Activated T-helper 2 cell treated with anti-CD3 and anti-CD28 coated beads, Interferon-gamma antibody, Interleukin-2, Interleukin-4, amounts not matched to agents 10 μg/mL and 5 μg/mL and 100 μg/mL, durations not matched to agents 14 hours and 24 hours and 36 hours (primary cell): ENCODE measurements at regions of chr3 and their contacts with region 1.

Region 1: GRCh38 chr3:122533931-122534334 is 19.2 kb upstream of the KPNA1 start:
- DNase-seq: peak; percentile 44
- H3K4me3 Mint-ChIP-seq: no peak overlapping the region
- H3K27ac Mint-ChIP-seq: peak overlapping the region; percentile 54
- H3K4me1 Mint-ChIP-seq: peaks cover 46% of the 10 kb centered on the region
- H3K27me3 Mint-ChIP-seq: no peaks in the 10 kb centered on the region

Region 2: GRCh38 chr3:122392868-122393844 is 140.8 kb before region 1 on chr3:
- intact Hi-C with region 1: loop called (anchors 10 kb)
- DNase-seq: no peak
- H3K4me3 Mint-ChIP-seq: no peak overlapping the region
- H3K27ac Mint-ChIP-seq: no peak overlapping the region
- H3K4me1 Mint-ChIP-seq: peaks cover 54% of the 10 kb centered on the region
- H3K27me3 Mint-ChIP-seq: no peaks in the 10 kb centered on the region

Region 3: DNA sequence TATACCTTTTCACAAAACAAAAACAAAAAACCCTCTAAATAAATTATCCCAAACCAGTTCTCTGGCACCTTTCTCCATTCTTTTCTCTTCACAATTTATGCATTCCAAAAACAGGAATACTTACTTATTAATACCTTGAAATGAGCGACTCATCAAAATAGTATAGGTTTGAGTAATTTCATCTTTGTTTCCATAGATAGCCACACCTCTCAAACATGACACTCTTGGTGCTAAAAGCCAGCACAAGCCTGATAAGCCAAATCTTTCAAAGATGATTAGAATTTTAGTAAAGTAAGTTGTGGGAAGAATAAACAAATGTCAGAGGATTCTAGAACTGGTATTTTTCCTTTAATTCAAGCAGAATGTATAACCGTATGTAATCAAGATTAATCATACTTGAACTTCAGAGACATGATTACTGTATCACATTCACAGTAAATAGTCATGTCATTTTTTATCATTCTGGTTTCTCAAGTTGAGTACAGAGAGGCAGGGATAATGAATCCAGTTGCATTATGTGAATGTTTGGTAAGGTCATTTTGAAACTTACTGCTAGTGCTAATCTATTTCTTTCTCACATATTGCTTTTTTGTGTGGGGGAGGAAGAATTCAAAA is 106.0 kb before region 1 on chr3:
- intact Hi-C with region 1: loop called (anchors 5 kb)
- DNase-seq: no peak
- H3K4me3 Mint-ChIP-seq: no peak overlapping the region
- H3K27ac Mint-ChIP-seq: peak overlapping the region; percentile 76
- H3K4me1 Mint-ChIP-seq: peaks cover 17% of the 10 kb centered on the region
- H3K27me3 Mint-ChIP-seq: no peaks in the 10 kb centered on the region

Region 4: DNA sequence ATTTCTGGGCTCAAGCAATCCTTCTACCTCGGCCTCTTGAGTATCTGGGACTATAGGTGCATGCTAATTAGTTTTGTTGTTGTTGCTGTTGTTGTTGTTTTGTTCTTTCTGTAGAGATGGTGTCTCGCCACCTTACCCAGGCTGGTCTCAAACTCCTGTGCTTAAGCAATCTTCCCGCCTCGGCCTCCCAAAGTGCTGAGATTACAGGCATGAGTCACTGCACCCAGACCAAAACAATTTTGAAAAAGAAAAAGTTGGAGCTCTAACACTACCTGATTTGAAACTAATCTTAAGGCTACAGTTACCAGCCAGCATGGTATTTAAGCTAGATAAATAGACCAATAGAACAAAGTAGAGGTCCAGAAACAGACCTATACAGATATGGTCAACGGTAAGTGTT is 48.9 kb before region 1 on chr3:
- intact Hi-C with region 1: loop called (anchors 1 kb)
- DNase-seq: no peak
- H3K4me3 Mint-ChIP-seq: no peak overlapping the region
- H3K27ac Mint-ChIP-seq: no peak overlapping the region
- H3K4me1 Mint-ChIP-seq: peaks cover 43% of the 10 kb centered on the region
- H3K27me3 Mint-ChIP-seq: no peaks in the 10 kb centered on the region

Region 5: GRCh38 chr3:122497425-122497824 is 36.5 kb before region 1 on chr3:
- intact Hi-C with region 1: loop called (anchors 1 kb)
- DNase-seq: no peak
- H3K4me3 Mint-ChIP-seq: no peak overlapping the region
- H3K27ac Mint-ChIP-seq: no peak overlapping the region
- H3K4me1 Mint-ChIP-seq: peaks cover 44% of the 10 kb centered on the region
- H3K27me3 Mint-ChIP-seq: no peaks in the 10 kb centered on the region

Region 6: GRCh38 chr3:122514123-122515019 is 19.6 kb before region 1 on chr3 and contains the start of gene KPNA1:
- intact Hi-C with region 1: loop called (anchors 1 kb)
- DNase-seq: peak; percentile 87
- H3K4me3 Mint-ChIP-seq: peak within 1 kb of the TSS; percentile 87
- H3K27ac Mint-ChIP-seq: peak within 1 kb of the TSS; percentile 90
- H3K4me1 Mint-ChIP-seq: peaks cover 28% of the 10 kb centered on the region
- H3K27me3 Mint-ChIP-seq: peaks cover 5% of the 10 kb centered on the region
- total RNA-seq, gene KPNA1: 67.5 and 70.5 TPM in 2 replicates

Region 7: GRCh38 chr3:122576174-122576940 is 42.4 kb after region 1 on chr3:
- intact Hi-C with region 1: loop called (anchors 1 kb)
- DNase-seq: no peak
- H3K4me3 Mint-ChIP-seq: peak overlapping the region; percentile 35
- H3K27ac Mint-ChIP-seq: peak overlapping the region; percentile 88
- H3K4me1 Mint-ChIP-seq: peaks cover 44% of the 10 kb centered on the region
- H3K27me3 Mint-ChIP-seq: no peaks in the 10 kb centered on the region

Region 8: GRCh38 chr3:122635789-122636188 is 101.9 kb after region 1 on chr3:
- intact Hi-C with region 1: no loop called
- DNase-seq: no peak
- H3K4me3 Mint-ChIP-seq: no peak overlapping the region
- H3K27ac Mint-ChIP-seq: no peak overlapping the region
- H3K4me1 Mint-ChIP-seq: peaks cover under 1% of the 10 kb centered on the region
- H3K27me3 Mint-ChIP-seq: no peaks in the 10 kb centered on the region